Breast epithelium (tissue), 4 donors: ENCODE measurements at regions of chr13 and their contacts with region 1.

Region 1: GRCh38 chr13:82257790-82258507 is 1624.3 kb downstream of the SLITRK1 start:
- DNase-seq: no peak
- H3K4me3 ChIP-seq: no peak overlapping the region
- H3K27ac ChIP-seq: no peak overlapping the region
- H3K4me1 ChIP-seq: no peaks in the 10 kb centered on the region
- H3K27me3 ChIP-seq: no peaks in the 10 kb centered on the region
- CTCF ChIP-seq: no peak
- POLR2A ChIP-seq: no peak

Region 2: GRCh38 chr13:81381560-81381959 is 876.4 kb before region 1 on chr13:
- intact Hi-C with region 1: loop called (anchors 5 kb)
- DNase-seq: no peak
- H3K4me3 ChIP-seq: no peak overlapping the region
- H3K27ac ChIP-seq: no peak overlapping the region
- H3K4me1 ChIP-seq: no peaks in the 10 kb centered on the region
- H3K27me3 ChIP-seq: no peaks in the 10 kb centered on the region
- CTCF ChIP-seq: no peak
- POLR2A ChIP-seq: no peak